ENCODE measurements at regions of chr6 and their contacts with region 1.

Region 1: GRCh38 chr6:39102071-39102820 is 12.7 kb downstream of the SAYSD1 start:
- DNase-seq: peak; percentile 36 to 73 (median 67)
- H3K4me3 ChIP-seq: no peak overlapping the region
- H3K27ac ChIP-seq: no peak overlapping the region
- H3K4me1 ChIP-seq: peaks cover 0 to 3% (median 0%) of the 10 kb centered on the region in 4 experiments
- H3K27me3 ChIP-seq: peaks cover 2 to 22% (median 10%) of the 10 kb centered on the region in 5 experiments

Region 2: GRCh38 chr6:38997128-38997761 is 105.0 kb before region 1 on chr6:
- CTCF ChIA-PET with region 1: interaction called, 41 read pairs
- POLR2A ChIA-PET with region 1: no interaction called
- DNase-seq: peak; percentile 60 to 80 (median 73)
- H3K4me3 ChIP-seq: no peak overlapping the region
- H3K27ac ChIP-seq: no peak overlapping the region
- H3K4me1 ChIP-seq: no peaks in the 10 kb centered on the region
- H3K27me3 ChIP-seq: peaks cover 12 to 45% (median 15%) of the 10 kb centered on the region in 5 experiments

Measured in common myeloid progenitor, CD34-positive (primary cell).